ENCODE measurements at regions of chr6 and their contacts with region 1.

Region 1: DNA sequence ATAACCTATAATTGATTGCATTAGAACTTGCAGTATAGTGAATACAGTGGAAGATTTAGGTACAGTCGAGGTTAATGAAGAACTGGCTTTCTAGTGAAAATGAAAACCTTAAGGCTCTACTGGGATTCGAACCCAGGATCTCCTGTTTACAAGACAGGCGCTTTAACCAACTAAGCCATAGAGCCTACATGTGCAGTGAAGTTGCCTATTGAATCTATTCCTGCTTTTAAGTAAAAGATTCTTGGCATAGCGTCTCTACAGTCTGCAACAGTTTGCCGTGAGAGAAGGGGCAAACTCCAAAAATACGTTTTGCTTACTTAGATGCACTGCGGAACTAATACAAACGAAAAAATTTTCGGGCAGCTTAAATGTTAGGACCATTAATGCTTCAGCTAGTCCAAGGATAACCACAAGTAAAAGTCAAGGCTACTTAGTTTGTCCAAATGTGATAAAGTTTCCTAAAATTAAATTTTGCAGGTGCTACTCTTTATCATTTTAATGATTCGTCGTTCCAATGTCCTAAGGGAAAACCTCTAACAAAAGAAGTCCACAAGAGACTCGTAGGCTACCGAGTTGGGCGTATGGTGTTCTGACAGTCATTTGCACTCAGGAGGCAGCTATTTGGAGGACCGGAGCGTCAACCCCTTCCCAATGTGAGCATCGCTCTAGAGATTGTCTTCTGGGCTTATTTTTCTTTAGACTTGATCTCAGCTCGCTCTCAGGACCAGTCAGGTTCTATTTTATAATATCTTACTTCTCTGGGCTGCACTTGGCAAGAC is 31.3 kb upstream of the ZSCAN23 start:
- DNase-seq: peak; percentile 64 to 93 (median 76)
- ATAC-seq: peak; percentile 96
- H3K4me3 ChIP-seq: peak overlapping the region; percentile 55
- H3K27ac ChIP-seq: peak overlapping the region; percentile 2; the same call in 1 of the 3 replicates
- H3K4me1 ChIP-seq: no peaks in the 10 kb centered on the region; a peak in 2 of 5 replicates
- H3K27me3 ChIP-seq: no peaks in the 10 kb centered on the region
- CTCF ChIP-seq: peak in 1 of 3 experiments; percentile 13; a peak in 1 of 6 replicates
- EP300 ChIP-seq: peak; percentile 87
- POLR2A ChIP-seq: peak; percentile 59
- RAD21 ChIP-seq: no peak; a peak in 2 of 4 replicates

Region 2: GRCh38 chr6:28081486-28081751 is 393.2 kb before region 1 on chr6:
- CTCF ChIA-PET with region 1: no interaction called
- POLR2A ChIA-PET with region 1: no interaction called
- in situ Hi-C with region 1: no loop called
- intact Hi-C with region 1: no loop called
- DNase-seq: peak in 1 of 4 experiments; percentile 32
- ATAC-seq: peak; percentile 2; the same call in 1 of the 3 replicates
- H3K4me3 ChIP-seq: peak overlapping the region; percentile 96
- H3K27ac ChIP-seq: peak overlapping the region; percentile 94
- H3K4me1 ChIP-seq: peaks cover 0 to 2% of the 10 kb centered on the region in 2 experiments; a peak in 4 of 5 replicates
- H3K27me3 ChIP-seq: no peaks in the 10 kb centered on the region
- CTCF ChIP-seq: no peak
- EP300 ChIP-seq: no peak
- POLR2A ChIP-seq: no peak
- RAD21 ChIP-seq: no peak

Region 3: GRCh38 chr6:28399350-28400121 is 75.1 kb before region 1 on chr6 and contains the start of gene ZSCAN12:
- CTCF ChIA-PET with region 1: no interaction called
- POLR2A ChIA-PET with region 1: interaction called, 3 read pairs
- in situ Hi-C with region 1: no loop called
- intact Hi-C with region 1: loop called (anchors 2 kb)
- DNase-seq: peak; percentile 90 to 99 (median 91)
- ATAC-seq: peak; percentile 88
- H3K4me3 ChIP-seq: peak within 1 kb of the TSS; percentile 61
- H3K27ac ChIP-seq: peak within 1 kb of the TSS; percentile 80
- H3K4me1 ChIP-seq: peaks cover 21 to 36% of the 10 kb centered on the region in 2 experiments
- H3K27me3 ChIP-seq: no peaks in the 10 kb centered on the region
- CTCF ChIP-seq: peak; percentile 74 to 82 (median 79)
- EP300 ChIP-seq: peak; percentile 74
- POLR2A ChIP-seq: peak; percentile 97
- RAD21 ChIP-seq: peak; percentile 37 to 47
- polyA plus RNA-seq, gene ZSCAN12: 2.5 to 7.9 TPM

Measured in K562 (cell line).